PC-9 (cell line): ENCODE measurements at regions of chr15 and their contacts with region 1.

Region 1: GRCh38 chr15:58878011-58878411 is 55.5 kb downstream of the SLTM start:
- DNase-seq: no peak
- H3K4me3 ChIP-seq: no peak overlapping the region
- H3K27ac ChIP-seq: no peak overlapping the region
- H3K4me1 ChIP-seq: no peaks in the 10 kb centered on the region
- H3K27me3 ChIP-seq: no peaks in the 10 kb centered on the region
- CTCF ChIP-seq: no peak

Region 2: GRCh38 chr15:58528188-58528870 is 349.7 kb before region 1 on chr15:
- CTCF ChIA-PET with region 1: no interaction called
- POLR2A ChIA-PET with region 1: interaction called, 11 read pairs
- intact Hi-C with region 1: no loop called
- DNase-seq: peak; percentile 57 to 77
- H3K4me3 ChIP-seq: no peak overlapping the region
- H3K27ac ChIP-seq: peak overlapping the region; percentile 55
- H3K4me1 ChIP-seq: peaks cover 42% of the 10 kb centered on the region
- H3K27me3 ChIP-seq: no peaks in the 10 kb centered on the region
- CTCF ChIP-seq: no peak

Region 3: GRCh38 chr15:58999694-59000093 is 121.7 kb after region 1 on chr15:
- CTCF ChIA-PET with region 1: no interaction called
- POLR2A ChIA-PET with region 1: no interaction called
- intact Hi-C with region 1: no loop called
- DNase-seq: no peak
- H3K4me3 ChIP-seq: no peak overlapping the region
- H3K27ac ChIP-seq: no peak overlapping the region
- H3K4me1 ChIP-seq: no peaks in the 10 kb centered on the region
- H3K27me3 ChIP-seq: no peaks in the 10 kb centered on the region
- CTCF ChIP-seq: no peak